A549 (cell line): ENCODE measurements at regions of chr19 and their contacts with region 1.

Region 1: DNA sequence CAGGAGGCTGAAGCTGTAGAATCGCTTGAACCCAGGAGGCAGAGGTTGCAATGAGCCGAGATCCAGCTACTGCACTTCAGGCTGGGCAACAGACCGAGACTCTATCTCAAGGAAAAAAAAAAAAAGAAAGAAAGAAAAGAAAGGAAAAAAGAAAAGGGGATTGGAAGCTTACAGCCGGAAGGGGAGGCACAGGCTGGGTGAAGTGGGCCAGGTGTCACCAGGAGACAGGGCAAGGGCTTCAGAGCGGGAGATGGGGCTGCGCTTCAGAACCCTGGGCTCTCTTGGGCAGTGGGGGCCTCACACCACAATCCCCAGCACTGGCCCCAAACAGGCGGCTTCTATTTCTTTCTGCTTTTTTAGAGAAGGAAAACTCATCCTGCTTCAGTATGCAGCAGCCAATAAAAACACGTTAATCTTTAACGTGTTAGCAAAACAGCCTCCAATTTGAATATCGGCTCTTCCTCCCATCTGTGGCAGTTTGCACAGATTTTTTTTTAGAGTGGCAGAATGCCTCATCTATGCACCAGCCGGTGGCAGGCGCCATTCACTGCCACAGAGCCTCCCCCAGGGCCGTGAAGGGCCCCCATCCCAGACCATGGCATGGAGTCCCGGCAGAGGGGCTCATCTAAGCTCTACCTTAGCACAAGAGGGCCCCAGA is 46.6 kb upstream of the C19orf12 start:
- DNase-seq: no peak
- ATAC-seq: no peak
- H3K4me3 ChIP-seq: no peak overlapping the region
- H3K27ac ChIP-seq: no peak overlapping the region
- H3K4me1 ChIP-seq: no peaks in the 10 kb centered on the region
- CTCF ChIP-seq: no peak
- EP300 ChIP-seq: no peak
- POLR2A ChIP-seq: no peak
- RAD21 ChIP-seq: no peak

Region 2: DNA sequence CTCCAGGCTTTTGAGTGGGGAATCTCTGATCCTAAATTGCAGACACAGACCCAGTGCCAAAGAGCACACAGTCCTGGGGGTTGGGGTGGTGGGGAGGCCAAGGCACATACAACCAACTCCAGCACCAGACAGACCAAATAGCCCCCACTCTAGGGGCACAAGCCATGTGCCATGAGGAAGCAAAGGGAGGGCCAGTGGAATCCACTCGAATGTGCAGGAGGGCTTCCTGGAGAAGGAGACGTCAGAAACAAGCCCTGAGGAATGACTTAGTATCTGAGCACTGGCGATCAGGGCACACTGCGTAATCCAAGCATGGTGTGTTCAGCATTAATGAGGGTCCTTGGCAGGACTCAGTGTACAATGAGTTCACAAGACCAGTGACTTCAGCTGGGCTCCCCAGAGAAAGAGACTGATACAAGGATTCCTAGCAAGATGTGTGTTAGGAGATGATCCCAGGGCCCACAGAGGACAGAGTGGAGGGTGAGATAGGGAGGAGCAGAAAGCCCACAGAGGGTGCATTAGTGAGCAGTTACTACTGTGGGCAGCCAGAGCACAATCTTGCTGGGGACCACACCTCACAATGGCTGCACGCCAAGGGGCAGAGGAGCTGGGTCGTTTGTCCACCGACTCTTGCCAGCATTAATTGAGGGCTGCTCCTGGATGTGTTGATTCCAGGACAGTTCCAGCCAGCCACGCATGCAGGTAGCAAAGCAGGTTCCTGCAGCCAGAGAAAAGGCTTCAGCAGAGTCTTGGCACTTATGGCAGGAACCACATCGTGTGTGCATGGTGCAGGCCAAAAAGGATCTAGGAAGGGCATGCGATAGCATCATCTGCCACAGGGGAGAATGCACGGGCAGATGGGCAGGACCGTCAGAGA is 388.5 kb before region 1 on chr19:
- CTCF ChIA-PET with region 1: no interaction called
- POLR2A ChIA-PET with region 1: no interaction called
- DNase-seq: no peak
- ATAC-seq: no peak
- H3K4me3 ChIP-seq: no peak overlapping the region
- H3K27ac ChIP-seq: no peak overlapping the region
- H3K4me1 ChIP-seq: no peaks in the 10 kb centered on the region
- CTCF ChIP-seq: no peak
- EP300 ChIP-seq: no peak
- POLR2A ChIP-seq: no peak
- RAD21 ChIP-seq: no peak

Region 3: DNA sequence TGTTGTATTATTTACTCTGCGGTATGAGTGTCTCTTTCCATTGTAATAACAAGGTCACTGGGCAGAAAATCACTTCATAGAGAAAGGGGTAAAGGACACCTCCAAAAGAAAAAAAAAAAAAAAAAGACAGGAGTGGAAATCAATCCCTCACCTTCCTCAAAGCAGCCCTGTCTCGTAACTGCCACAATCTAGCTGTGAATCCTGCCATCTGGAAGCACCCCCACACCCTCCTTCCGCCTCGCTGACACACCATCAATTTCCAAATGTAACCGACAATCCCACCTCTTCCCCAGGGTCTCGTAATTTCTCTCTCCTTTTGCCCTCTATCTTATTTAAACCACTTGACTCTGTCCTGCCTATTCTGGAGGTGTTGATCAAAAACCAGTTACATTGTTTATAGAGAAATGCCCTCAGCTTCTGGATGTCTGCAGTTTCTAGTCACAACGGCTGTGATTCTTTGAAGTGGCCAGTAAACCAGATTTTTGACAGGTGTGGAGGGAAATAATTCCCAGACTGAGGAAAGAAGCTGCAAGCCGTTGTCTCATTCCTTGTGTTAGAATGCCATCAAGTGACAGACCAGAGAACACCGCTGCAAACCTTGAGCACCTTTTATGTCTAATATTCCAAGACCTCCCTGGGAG is 164.7 kb before region 1 on chr19:
- CTCF ChIA-PET with region 1: no interaction called
- POLR2A ChIA-PET with region 1: no interaction called
- DNase-seq: peak in 1 of 2 experiments; percentile 64
- ATAC-seq: peak; percentile 69 to 70; a peak in 5 of 6 replicates
- H3K4me3 ChIP-seq: no peak overlapping the region
- H3K27ac ChIP-seq: no peak overlapping the region
- H3K4me1 ChIP-seq: no peaks in the 10 kb centered on the region
- CTCF ChIP-seq: peak; percentile 76
- EP300 ChIP-seq: no peak
- POLR2A ChIP-seq: no peak
- RAD21 ChIP-seq: peak; percentile 81 to 83

Region 4: DNA sequence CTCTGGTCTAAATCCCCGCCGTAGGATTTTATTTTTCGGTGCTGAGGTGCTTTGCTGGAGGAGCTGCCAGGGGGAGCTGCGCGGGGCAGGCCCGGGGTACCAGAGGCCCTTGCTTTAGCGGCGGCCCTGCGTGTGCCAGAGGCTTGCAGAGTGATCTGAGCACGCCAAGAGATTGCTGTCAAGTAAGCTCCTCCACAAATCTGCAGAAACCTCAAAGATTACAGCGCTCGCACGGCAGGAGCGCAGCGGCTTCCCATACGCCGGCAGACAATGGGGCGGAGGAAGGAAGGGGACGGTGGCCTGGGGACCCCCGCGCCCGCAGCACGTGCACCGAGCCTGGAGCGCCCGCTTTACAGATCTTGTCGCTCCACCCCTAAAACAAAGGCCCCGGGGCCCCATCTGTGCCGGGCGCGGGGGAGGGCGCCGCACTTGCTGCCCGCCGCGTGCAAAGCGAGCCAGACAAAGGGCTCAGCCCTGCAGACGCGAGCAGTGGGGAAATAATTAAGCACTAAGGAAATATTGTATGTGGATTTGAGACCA is 37.5 kb before region 1 on chr19:
- CTCF ChIA-PET with region 1: interaction called, 62 read pairs
- POLR2A ChIA-PET with region 1: no interaction called
- DNase-seq: no peak
- ATAC-seq: no peak
- H3K4me3 ChIP-seq: no peak overlapping the region
- H3K27ac ChIP-seq: no peak overlapping the region
- H3K4me1 ChIP-seq: no peaks in the 10 kb centered on the region
- CTCF ChIP-seq: no peak
- EP300 ChIP-seq: no peak
- POLR2A ChIP-seq: no peak
- RAD21 ChIP-seq: no peak

Region 5: DNA sequence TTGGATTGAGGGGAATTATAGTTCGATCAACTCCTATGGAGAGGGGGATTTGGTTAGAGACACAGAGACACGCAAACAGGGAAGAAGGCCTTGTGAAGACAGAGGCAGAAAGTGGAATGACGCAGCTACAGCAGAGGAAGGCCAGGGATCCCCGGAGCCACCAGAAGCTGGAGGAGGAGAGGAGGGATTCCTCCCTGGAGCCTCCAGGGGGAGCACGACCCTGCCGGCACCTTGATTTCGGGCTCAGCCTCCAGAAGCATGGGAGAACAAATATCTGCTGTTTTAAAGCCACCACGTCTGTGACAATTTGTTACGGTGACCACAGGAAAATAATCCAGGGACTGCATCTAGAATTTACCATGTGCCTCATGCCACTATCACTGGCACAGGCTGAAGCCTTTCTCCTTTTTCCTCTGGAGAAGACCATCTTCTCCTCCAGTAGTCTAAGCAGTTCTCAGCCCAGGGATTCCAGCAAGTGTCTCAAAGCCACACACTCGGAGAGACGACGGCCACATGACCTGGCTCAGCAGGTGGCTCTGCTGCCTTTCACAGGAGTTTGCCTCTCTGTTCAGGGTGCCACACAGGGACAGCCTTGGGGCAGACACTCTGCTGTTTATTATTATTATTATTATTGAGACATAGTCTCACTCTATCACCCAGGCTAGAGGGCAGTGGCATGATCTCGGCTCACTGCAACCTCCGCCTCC is 10.2 kb after region 1 on chr19:
- CTCF ChIA-PET with region 1: interaction called, 243 read pairs
- POLR2A ChIA-PET with region 1: interaction called, 3 read pairs
- DNase-seq: peak; percentile 78 to 97
- ATAC-seq: peak; percentile 95 to 96
- H3K4me3 ChIP-seq: no peak overlapping the region
- H3K27ac ChIP-seq: 0 out of 6 replicates have a peak overlapping the region, but pooled peaks of 1 of the 2 experiments have one; percentile 24
- H3K4me1 ChIP-seq: peaks cover 3% of the 10 kb centered on the region; the same call in 1 of the 3 replicates
- CTCF ChIP-seq: peak; percentile 89
- EP300 ChIP-seq: no peak
- POLR2A ChIP-seq: no peak
- RAD21 ChIP-seq: peak; percentile 72 to 77

Region 6: GRCh38 chr19:29798774-29799497 is 37.2 kb after region 1 on chr19:
- CTCF ChIA-PET with region 1: interaction called, 35 read pairs
- POLR2A ChIA-PET with region 1: no interaction called
- DNase-seq: no peak
- ATAC-seq: peak in 1 of 2 experiments; percentile 32; a peak in 1 of 6 replicates
- H3K4me3 ChIP-seq: no peak overlapping the region
- H3K27ac ChIP-seq: no peak overlapping the region
- H3K4me1 ChIP-seq: no peaks in the 10 kb centered on the region
- CTCF ChIP-seq: no peak
- EP300 ChIP-seq: no peak
- POLR2A ChIP-seq: no peak
- RAD21 ChIP-seq: no peak

Region 7: GRCh38 chr19:29851769-29852521 is 90.2 kb after region 1 on chr19:
- CTCF ChIA-PET with region 1: interaction called, 53 read pairs
- POLR2A ChIA-PET with region 1: no interaction called
- DNase-seq: no peak
- ATAC-seq: no peak
- H3K4me3 ChIP-seq: no peak overlapping the region
- H3K27ac ChIP-seq: no peak overlapping the region
- H3K4me1 ChIP-seq: no peaks in the 10 kb centered on the region
- CTCF ChIP-seq: no peak
- EP300 ChIP-seq: no peak
- POLR2A ChIP-seq: no peak
- RAD21 ChIP-seq: no peak

Region 8: GRCh38 chr19:29873024-29873800 is 111.5 kb after region 1 on chr19:
- CTCF ChIA-PET with region 1: interaction called, 301 read pairs
- POLR2A ChIA-PET with region 1: no interaction called
- DNase-seq: peak; percentile 68 to 85
- ATAC-seq: peak; percentile 79 to 95
- H3K4me3 ChIP-seq: peak overlapping the region; percentile 70
- H3K27ac ChIP-seq: peak overlapping the region; percentile 74 to 84
- H3K4me1 ChIP-seq: peaks cover 9% of the 10 kb centered on the region
- CTCF ChIP-seq: peak; percentile 99
- EP300 ChIP-seq: no peak
- POLR2A ChIP-seq: no peak
- RAD21 ChIP-seq: peak; percentile 89 to 100

Region 9: GRCh38 chr19:29927944-29928625 is 166.4 kb after region 1 on chr19:
- CTCF ChIA-PET with region 1: no interaction called
- POLR2A ChIA-PET with region 1: no interaction called
- DNase-seq: no peak
- ATAC-seq: peak in 1 of 2 experiments; percentile 25; a peak in 1 of 6 replicates
- H3K4me3 ChIP-seq: no peak overlapping the region
- H3K27ac ChIP-seq: no peak overlapping the region
- H3K4me1 ChIP-seq: no peaks in the 10 kb centered on the region
- CTCF ChIP-seq: no peak
- EP300 ChIP-seq: no peak
- POLR2A ChIP-seq: no peak
- RAD21 ChIP-seq: no peak